ENCODE measurements at regions of chr19 and their contacts with region 1.

Region 1: GRCh38 chr19:1825909-1826556 is 14.0 kb upstream of the ATP8B3 start:
- DNase-seq: peak; percentile 77 to 82
- H3K4me3 ChIP-seq: no peak overlapping the region
- H3K27ac ChIP-seq: peak overlapping the region; percentile 34 to 55
- H3K4me1 ChIP-seq: no peaks in the 10 kb centered on the region
- H3K27me3 ChIP-seq: no peaks in the 10 kb centered on the region
- CTCF ChIP-seq: peak; percentile 85 to 95 (median 91)
- POLR2A ChIP-seq: no peak

Region 2: DNA sequence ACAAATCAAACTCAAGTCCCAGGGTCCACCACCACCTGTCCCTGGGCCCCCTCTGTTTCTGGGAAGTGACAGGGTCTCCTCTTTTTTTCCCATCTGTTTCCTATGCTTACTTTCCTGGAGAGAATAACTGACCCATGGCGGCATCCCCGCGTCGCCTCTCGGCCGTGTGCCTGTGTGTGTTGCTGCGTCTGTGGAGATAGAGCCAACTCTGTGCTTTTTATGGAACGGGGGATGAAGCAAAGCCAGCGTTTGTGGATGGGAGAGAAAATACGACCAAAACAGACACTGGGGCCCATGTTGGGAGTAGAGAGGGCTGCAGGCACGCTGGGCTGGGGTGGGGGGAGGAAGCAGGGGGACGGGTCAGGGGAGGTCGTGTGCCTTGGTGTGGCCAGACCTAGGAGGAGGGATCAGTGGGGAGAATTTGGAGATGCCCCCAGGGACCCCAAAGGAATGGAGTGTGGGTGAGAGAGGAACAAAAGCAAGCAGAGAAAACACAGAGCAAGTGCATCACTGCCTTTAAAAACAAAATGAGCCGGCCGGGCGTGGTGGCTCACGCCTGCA is 285.6 kb before region 1 on chr19:
- intact Hi-C with region 1: loop called (anchors 10 kb)
- DNase-seq: peak; percentile 31 to 53
- H3K4me3 ChIP-seq: no peak overlapping the region
- H3K27ac ChIP-seq: peak overlapping the region; percentile 15 to 73
- H3K4me1 ChIP-seq: peaks cover 0 to 5% of the 10 kb centered on the region in 2 donors
- H3K27me3 ChIP-seq: no peaks in the 10 kb centered on the region
- CTCF ChIP-seq: no peak
- POLR2A ChIP-seq: no peak

Region 3: GRCh38 chr19:1767464-1767933 is 58.5 kb before region 1 on chr19:
- intact Hi-C with region 1: loop called (anchors 10 kb)
- DNase-seq: peak in 1 of 2 donors; percentile 39
- H3K4me3 ChIP-seq: no peak overlapping the region
- H3K27ac ChIP-seq: no peak overlapping the region
- H3K4me1 ChIP-seq: no peaks in the 10 kb centered on the region
- H3K27me3 ChIP-seq: peaks cover 10 to 64% of the 10 kb centered on the region in 2 donors
- CTCF ChIP-seq: peak; percentile 83 to 91 (median 83)
- POLR2A ChIP-seq: no peak